ENCODE measurements at regions of chr21 and their contacts with region 1.

Region 1: DNA sequence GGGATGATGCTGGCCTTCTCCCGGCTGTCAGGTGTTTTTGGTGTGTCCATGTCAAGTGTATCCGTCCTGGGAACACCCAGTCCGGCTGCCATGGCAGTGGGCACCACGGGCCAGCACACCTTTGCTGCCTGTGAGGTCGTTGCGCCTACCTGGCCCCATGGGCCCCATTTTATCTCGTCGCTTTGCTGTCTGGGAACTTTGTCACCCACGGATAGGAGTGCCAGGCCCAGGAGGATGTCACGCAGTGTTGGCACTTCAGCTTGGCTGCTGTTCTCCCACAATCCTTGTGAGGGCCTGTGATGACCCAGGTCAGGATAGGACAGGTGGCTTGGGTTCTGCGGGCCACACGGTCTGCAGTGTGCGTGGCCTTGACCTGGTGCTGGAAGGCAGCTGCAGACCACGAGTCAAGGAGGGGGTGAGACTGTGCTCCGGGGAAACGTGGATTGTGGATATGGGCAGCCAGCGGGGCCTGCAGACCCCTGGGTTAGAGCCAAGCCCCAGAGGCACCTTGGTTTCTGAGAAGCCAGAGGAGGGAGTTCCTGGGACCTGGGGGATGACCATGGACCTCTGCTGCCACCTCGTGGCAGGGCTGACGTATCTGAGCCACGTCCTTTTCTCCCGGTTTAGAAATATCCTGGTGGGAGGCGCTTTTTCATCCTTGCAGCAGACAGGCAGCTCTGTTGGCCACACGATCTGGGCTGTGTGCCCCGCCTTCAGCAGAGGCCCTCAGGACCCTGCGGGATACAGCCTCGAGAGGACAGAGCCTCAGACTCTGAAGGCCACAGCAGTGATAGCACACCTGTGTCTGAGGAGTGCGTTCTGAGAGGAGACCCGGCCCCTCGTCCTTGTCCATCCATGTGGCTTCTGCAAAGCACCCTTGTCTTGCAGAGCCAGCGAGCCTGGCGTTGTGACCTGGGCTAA is 161.1 kb upstream of the COL6A1 start:
- DNase-seq: peak; percentile 69
- H3K4me3 Mint-ChIP-seq: no peak overlapping the region
- H3K27ac Mint-ChIP-seq: no peak overlapping the region
- H3K4me1 Mint-ChIP-seq: peaks cover 38% of the 10 kb centered on the region
- H3K27me3 Mint-ChIP-seq: peaks cover 7% of the 10 kb centered on the region

Region 2: DNA sequence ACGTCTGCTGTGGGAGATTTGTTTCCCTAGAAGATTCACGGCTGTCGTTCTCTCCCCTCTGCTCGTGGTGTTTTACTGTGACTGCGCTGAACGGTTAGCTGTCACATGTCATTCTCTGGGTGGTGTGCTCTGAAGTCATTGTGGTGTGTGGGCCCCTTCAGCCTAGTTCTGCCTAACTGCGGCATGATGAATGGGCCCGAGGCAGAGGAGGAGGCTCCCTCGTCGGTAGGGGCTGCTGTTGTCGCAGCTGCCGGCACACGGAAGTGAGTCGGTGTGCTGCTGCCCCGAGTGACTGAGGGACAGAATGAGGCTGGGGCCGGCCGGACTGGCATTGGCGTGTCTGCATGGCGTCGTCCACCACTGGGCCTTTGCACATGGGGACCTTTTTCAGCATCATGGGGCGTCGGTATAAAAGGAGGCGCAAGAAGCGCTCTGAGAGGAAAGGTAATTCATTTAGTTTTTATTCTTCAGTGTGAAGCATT is 668.1 kb before region 1 on chr21:
- intact Hi-C with region 1: loop called (anchors 10 kb)
- DNase-seq: peak; percentile 74
- H3K4me3 Mint-ChIP-seq: peak overlapping the region; percentile 81
- H3K27ac Mint-ChIP-seq: peak overlapping the region; percentile 83
- H3K4me1 Mint-ChIP-seq: peaks cover 38% of the 10 kb centered on the region
- H3K27me3 Mint-ChIP-seq: no peaks in the 10 kb centered on the region

Region 3: GRCh38 chr21:45439161-45439872 is 381.1 kb before region 1 on chr21:
- intact Hi-C with region 1: loop called (anchors 1 kb)
- DNase-seq: peak; percentile 77
- H3K4me3 Mint-ChIP-seq: no peak overlapping the region
- H3K27ac Mint-ChIP-seq: no peak overlapping the region
- H3K4me1 Mint-ChIP-seq: peaks cover 4% of the 10 kb centered on the region
- H3K27me3 Mint-ChIP-seq: no peaks in the 10 kb centered on the region

Region 4: GRCh38 chr21:45454926-45455673 is 365.3 kb before region 1 on chr21:
- intact Hi-C with region 1: no loop called
- DNase-seq: no peak
- H3K4me3 Mint-ChIP-seq: no peak overlapping the region
- H3K27ac Mint-ChIP-seq: no peak overlapping the region
- H3K4me1 Mint-ChIP-seq: no peaks in the 10 kb centered on the region
- H3K27me3 Mint-ChIP-seq: no peaks in the 10 kb centered on the region

Region 5: GRCh38 chr21:45554477-45555175 is 265.8 kb before region 1 on chr21:
- intact Hi-C with region 1: loop called (anchors 1 kb)
- DNase-seq: peak; percentile 82
- H3K4me3 Mint-ChIP-seq: peak overlapping the region; percentile 90
- H3K27ac Mint-ChIP-seq: peak overlapping the region; percentile 89
- H3K4me1 Mint-ChIP-seq: peaks cover 23% of the 10 kb centered on the region
- H3K27me3 Mint-ChIP-seq: no peaks in the 10 kb centered on the region

Region 6: GRCh38 chr21:45643021-45643980 is 177.1 kb before region 1 on chr21 and contains the start of gene PCBP3:
- intact Hi-C with region 1: loop called (anchors 1 kb)
- DNase-seq: peak; percentile 92
- H3K4me3 Mint-ChIP-seq: peak within 1 kb of the TSS; percentile 78
- H3K27ac Mint-ChIP-seq: no peak within 1 kb of the TSS
- H3K4me1 Mint-ChIP-seq: peaks cover 13% of the 10 kb centered on the region
- H3K27me3 Mint-ChIP-seq: peaks cover 8% of the 10 kb centered on the region
- total RNA-seq, gene PCBP3: 6.9 and 8.2 TPM in 2 replicates

Region 7: GRCh38 chr21:45854690-45855247 is 34.3 kb after region 1 on chr21:
- intact Hi-C with region 1: no loop called
- DNase-seq: no peak
- H3K4me3 Mint-ChIP-seq: no peak overlapping the region
- H3K27ac Mint-ChIP-seq: no peak overlapping the region
- H3K4me1 Mint-ChIP-seq: no peaks in the 10 kb centered on the region
- H3K27me3 Mint-ChIP-seq: no peaks in the 10 kb centered on the region

Region 8: DNA sequence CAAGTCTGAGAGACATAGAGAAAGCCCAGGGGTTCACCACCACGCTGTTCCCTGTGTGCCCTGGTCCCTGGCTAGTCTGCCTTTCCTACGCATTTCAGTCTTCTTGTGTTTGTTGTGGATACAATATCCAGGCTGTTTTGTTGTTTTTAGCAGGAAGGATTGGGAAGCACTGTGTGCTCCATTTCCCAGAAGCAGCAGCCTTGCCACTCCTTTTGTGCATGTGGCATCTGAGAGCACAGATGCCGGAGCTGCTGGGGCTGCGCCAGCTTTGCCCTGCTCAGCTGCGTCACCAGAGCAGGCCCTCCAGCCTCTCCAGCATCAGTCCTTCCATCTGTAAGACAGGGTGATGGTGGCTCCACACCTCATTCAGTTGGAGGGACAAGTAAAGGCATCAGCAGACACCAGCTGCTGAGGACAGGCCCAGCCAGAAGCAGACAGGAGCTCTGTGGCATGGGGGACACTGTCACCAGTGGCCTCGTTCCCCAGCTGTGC is 66.7 kb after region 1 on chr21:
- intact Hi-C with region 1: loop called (anchors 2 kb)
- DNase-seq: no peak
- H3K4me3 Mint-ChIP-seq: no peak overlapping the region
- H3K27ac Mint-ChIP-seq: peak overlapping the region; percentile 4
- H3K4me1 Mint-ChIP-seq: peaks cover 57% of the 10 kb centered on the region
- H3K27me3 Mint-ChIP-seq: peaks cover 27% of the 10 kb centered on the region

Region 9: GRCh38 chr21:45899322-45900033 is 79.0 kb after region 1 on chr21:
- intact Hi-C with region 1: no loop called
- DNase-seq: no peak
- H3K4me3 Mint-ChIP-seq: no peak overlapping the region
- H3K27ac Mint-ChIP-seq: no peak overlapping the region
- H3K4me1 Mint-ChIP-seq: no peaks in the 10 kb centered on the region
- H3K27me3 Mint-ChIP-seq: no peaks in the 10 kb centered on the region

Region 10: GRCh38 chr21:46022551-46023525 is 202.4 kb after region 1 on chr21:
- intact Hi-C with region 1: no loop called
- DNase-seq: no peak
- H3K4me3 Mint-ChIP-seq: no peak overlapping the region
- H3K27ac Mint-ChIP-seq: no peak overlapping the region
- H3K4me1 Mint-ChIP-seq: no peaks in the 10 kb centered on the region
- H3K27me3 Mint-ChIP-seq: peaks cover 24% of the 10 kb centered on the region